Activated CD4-positive, alpha-beta memory T cell treated with anti-CD3 and anti-CD28 coated beads for 36 hours (primary cell): ENCODE measurements at regions of chr20 and their contacts with region 1.

Region 1: GRCh38 chr20:50070991-50071888 is 41.7 kb downstream of the UBE2V1 start:
- DNase-seq: peak; percentile 94
- H3K4me3 Mint-ChIP-seq: peak overlapping the region; percentile 54
- H3K27ac Mint-ChIP-seq: no peak overlapping the region
- H3K4me1 Mint-ChIP-seq: peaks cover 2% of the 10 kb centered on the region
- H3K27me3 Mint-ChIP-seq: no peaks in the 10 kb centered on the region

Region 2: DNA sequence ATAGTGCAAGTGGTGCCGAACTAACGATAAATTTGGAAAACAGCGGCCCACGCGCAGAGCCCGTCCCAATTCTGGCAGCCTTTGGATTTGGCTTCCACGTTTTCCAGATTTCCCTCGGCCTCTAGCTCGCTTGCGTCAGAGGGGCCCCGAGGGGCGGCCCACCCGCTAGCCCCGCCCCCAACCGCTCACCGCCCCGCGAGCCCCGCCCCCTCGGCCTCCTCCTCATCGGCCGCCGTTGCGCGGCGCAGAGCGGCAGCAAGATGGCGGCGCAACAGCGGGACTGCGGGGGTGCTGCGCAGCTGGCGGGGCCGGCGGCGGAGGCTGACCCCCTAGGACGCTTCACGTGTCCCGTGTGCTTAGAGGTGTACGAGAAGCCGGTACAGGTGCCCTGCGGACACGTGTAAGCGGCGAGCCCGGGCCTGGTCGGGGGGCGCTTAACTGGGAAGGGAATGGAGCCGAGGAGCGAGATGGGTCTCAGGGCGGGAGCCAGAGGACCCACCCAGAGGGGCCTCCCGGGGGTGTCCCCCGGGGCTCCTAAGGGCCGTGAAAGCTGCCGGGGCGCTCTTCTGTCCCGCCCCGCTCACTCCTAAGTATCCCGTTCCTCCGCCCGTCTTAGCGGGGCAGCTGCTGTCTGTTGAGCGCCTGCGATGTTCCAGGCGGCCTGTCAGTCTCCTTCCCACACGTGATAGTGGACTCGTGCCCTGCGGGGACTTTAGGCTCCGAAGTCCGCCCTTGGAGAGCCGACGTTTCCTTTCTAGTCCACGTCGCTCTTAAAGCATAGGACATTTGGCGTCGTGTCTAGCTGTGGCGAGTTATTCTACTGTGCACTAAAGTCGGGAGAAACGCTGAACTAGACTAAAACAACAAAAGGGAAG is 134.8 kb before region 1 on chr20 and contains the start of gene RNF114:
- CTCF ChIA-PET with region 1: interaction called, 30 read pairs
- POLR2A ChIA-PET with region 1: no interaction called
- intact Hi-C with region 1: no loop called
- DNase-seq: peak; percentile 94
- H3K4me3 Mint-ChIP-seq: peak within 1 kb of the TSS; percentile 93
- H3K27ac Mint-ChIP-seq: peak within 1 kb of the TSS; percentile 71
- H3K4me1 Mint-ChIP-seq: peaks cover 37% of the 10 kb centered on the region
- H3K27me3 Mint-ChIP-seq: no peaks in the 10 kb centered on the region
- total RNA-seq, gene RNF114: 72.1 to 72.4 TPM

Region 3: DNA sequence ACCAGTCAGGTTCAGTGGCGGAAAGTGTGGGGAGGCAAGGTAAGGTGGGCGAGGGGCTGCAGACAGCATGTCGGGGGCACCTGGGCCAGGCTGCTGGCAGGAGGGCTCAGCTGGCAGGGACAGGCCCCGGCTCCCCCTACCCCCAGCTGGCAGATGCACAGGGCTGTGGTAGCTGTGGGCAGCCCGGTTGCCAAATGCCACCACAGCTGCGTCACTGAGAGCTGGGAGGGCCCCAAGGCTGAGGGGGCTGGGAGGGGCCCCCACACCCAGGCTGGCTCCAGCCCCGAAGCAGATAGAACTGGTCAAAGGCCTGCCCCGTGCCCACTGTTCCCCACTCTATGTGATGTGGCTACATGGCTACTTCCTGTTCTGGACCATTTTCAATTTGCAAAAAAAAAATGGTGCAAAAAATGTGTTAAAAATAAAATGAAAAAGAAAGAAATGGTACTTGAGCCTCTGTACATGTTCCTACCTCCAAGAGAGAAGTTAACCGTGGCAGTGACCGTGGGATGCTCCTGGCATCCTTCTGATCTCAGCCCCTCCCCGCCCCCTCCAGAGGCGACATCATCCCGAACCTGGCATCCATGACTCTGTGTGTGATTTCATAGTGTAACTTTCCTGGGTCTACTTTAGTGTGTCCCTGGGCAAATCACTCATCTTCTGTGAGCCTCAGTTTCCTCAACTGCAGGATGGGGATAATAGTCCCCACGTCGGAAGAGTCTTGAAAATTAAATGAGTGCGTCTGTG is 22.6 kb before region 1 on chr20:
- CTCF ChIA-PET with region 1: interaction called, 12 read pairs
- POLR2A ChIA-PET with region 1: no interaction called
- intact Hi-C with region 1: no loop called
- DNase-seq: peak; percentile 27
- H3K4me3 Mint-ChIP-seq: no peak overlapping the region
- H3K27ac Mint-ChIP-seq: no peak overlapping the region
- H3K4me1 Mint-ChIP-seq: no peaks in the 10 kb centered on the region
- H3K27me3 Mint-ChIP-seq: peaks cover 14% of the 10 kb centered on the region

Region 4: DNA sequence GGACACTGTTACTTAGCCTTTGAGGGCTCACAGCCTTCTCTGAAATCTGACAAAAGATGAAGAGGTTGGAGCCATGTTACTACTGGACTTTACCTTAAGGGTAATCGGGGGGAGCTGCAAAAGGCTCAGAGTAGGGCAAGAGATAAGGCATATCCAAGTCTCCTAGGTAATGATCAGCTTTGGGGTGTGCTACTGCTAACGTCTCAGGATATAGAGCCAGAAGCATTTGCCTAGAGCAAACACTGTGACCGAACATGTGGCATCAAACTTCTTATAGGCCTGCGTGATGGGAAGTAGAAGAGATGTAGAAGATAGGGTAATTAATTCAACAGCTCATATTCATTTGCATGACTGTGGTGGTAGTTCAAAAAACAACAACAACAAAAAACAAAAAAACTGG is 30.6 kb after region 1 on chr20:
- CTCF ChIA-PET with region 1: interaction called, 10 read pairs
- POLR2A ChIA-PET with region 1: no interaction called
- intact Hi-C with region 1: no loop called
- DNase-seq: no peak
- H3K4me3 Mint-ChIP-seq: no peak overlapping the region
- H3K27ac Mint-ChIP-seq: peak overlapping the region; percentile 8
- H3K4me1 Mint-ChIP-seq: peaks cover 49% of the 10 kb centered on the region
- H3K27me3 Mint-ChIP-seq: no peaks in the 10 kb centered on the region

Region 5: GRCh38 chr20:50165684-50166554 is 94.7 kb after region 1 on chr20:
- CTCF ChIA-PET with region 1: interaction called, 24 read pairs
- POLR2A ChIA-PET with region 1: no interaction called
- intact Hi-C with region 1: loop called (anchors 5 kb)
- DNase-seq: peak; percentile 95
- H3K4me3 Mint-ChIP-seq: peak overlapping the region; percentile 61
- H3K27ac Mint-ChIP-seq: peak overlapping the region; percentile 84
- H3K4me1 Mint-ChIP-seq: peaks cover 11% of the 10 kb centered on the region
- H3K27me3 Mint-ChIP-seq: peaks cover 2% of the 10 kb centered on the region